GM13977 (cell line): ENCODE measurements at regions of chr2 and their contacts with region 1.

Region 1: GRCh38 chr2:221573430-221574230 is 1.5 kb upstream of the EPHA4 start:
- DNase-seq: peak; percentile 88
- CTCF ChIP-seq: peak; percentile 99

Region 2: DNA sequence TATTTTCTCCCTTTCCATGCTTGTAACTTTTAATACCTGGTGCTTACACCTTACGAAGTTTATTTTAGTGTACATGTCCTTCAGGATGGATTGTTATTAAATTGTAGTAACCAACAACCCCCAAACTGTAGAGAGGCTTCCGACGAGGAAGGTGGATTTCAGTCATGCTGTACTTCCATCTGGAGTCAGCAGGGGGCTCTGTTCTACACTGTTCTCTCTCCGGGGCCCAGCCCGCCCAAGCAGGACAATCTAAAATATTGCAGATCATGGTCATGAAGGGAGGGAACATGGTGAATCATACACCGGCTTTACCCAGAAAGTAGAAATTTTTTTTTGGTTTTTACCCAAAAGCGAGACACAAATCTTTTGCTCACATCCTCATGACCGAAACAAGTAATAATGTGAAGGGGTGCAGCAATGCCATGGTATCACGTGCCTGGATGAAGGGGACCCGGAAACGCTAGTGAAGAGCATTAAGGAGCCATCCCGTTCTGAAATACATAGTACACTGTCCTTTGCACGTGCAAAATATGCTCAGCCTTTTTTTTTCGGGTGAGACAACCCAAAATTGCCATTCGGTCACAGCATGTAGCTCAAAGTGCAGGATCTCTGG is 886.3 kb before region 1 on chr2:
- in situ Hi-C with region 1: loop called (anchors 10 kb)
- DNase-seq: peak; percentile 47
- CTCF ChIP-seq: peak; percentile 80